ENCODE measurements at regions of chr9 and their contacts with region 1.

Region 1: DNA sequence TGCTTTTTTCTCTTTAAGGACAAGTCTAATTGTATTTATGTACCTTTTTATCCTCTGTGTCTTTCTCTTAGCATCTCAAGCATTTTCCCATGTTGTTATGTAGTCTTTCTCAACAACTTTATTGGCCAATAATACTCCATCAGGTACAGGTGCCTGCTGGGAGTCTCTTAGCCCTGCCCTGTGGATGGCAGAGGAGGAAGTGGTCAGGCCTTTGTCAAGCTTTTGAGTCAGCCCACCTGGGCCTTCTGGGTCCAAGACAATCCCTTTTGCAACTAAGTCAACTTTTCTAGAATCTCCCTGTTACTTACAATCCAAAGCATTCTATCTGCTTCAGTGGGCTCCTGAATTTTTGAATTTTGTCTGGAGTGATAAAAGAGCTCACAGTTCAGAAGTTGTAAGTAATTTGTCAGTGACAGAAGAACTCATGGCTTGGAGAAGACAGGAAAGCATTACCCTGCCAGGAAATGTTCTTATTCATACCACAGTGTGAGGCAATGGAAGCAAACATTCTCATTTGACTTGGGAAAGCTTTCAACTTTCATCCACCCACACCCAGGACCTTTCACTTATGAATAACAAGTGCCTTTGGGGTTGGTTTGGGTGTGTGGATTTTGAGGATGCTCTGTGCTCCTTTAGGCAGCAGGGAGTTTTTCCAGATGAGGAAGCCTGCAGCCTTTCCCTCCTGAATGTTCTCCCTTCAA is 200.0 kb upstream of the S1PR3 start:
- DNase-seq: peak; percentile 92
- H3K4me3 ChIP-seq: no peak overlapping the region
- H3K27ac ChIP-seq: peak overlapping the region; percentile 70 to 81 (median 78)
- H3K4me1 ChIP-seq: peaks cover 28 to 45% (median 44%) of the 10 kb centered on the region in 4 donors
- H3K27me3 ChIP-seq: no peaks in the 10 kb centered on the region
- CTCF ChIP-seq: no peak
- EP300 ChIP-seq: peak; percentile 73
- POLR2A ChIP-seq: no peak

Region 2: DNA sequence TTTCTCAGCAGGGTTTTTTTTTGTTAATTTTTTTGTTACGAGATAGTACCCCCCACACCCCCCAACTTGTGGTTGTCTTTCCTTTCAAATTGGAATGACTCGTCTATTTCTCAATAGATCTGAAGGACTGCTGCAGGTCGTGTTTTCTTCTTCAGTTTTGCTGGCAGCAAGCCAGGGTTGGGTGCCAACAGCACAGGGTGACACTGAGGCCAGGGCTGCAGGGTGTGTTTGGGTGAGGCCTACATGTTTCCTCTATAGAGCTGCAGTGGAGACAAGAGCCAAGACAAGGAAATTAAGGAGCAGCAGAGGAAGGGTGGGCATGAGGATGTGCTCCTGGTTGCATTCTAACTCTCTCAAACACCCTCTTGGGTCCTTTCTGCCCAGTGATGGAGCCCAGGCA is 204.1 kb before region 1 on chr9:
- intact Hi-C with region 1: loop called (anchors 5 kb)
- DNase-seq: no peak
- H3K4me3 ChIP-seq: no peak overlapping the region
- H3K27ac ChIP-seq: no peak overlapping the region
- H3K4me1 ChIP-seq: peaks cover 6 to 45% (median 40%) of the 10 kb centered on the region in 4 donors
- H3K27me3 ChIP-seq: no peaks in the 10 kb centered on the region
- CTCF ChIP-seq: no peak
- EP300 ChIP-seq: no peak
- POLR2A ChIP-seq: no peak